ENCODE measurements at regions of chr6 and their contacts with region 1.

Region 1: DNA sequence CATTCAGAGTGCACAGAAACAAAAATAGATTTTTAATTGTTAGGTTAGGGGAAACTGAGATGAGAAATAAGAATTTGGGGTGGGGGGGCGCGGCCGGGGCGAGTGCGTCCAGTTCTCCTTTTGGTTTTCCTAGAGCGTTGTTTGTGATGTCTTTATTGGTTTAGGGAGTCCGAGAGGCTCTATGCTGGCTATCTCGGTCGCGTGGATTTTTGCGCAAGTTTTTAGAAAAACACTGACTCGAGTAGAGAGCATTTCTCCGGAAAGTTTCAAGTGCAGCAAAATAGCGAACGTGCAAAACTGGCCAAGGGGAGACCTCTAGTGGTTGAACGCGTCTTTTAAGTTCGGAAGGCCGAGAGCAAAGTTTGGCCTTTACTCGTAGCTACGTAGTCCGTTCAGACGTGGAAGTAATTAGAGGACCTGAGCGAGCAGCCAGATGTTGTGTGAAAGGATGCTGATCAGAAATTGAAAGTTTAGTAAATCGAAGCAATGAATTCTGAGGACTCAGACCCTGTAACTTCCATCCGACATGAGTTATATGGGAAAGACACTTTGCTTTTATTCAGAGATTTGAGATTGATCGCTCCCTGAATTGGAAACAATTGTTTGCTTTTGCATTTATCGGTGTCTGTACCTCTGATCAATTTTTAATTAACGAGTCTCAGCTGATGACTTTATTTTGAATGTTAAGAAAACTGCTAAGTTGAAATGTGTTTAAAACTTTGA is 2.7 kb downstream of the L3MBTL3 start:
- DNase-seq: peak; percentile 89
- H3K4me3 ChIP-seq: peak overlapping the region; percentile 74
- H3K27ac ChIP-seq: peak overlapping the region; percentile 41
- H3K27me3 ChIP-seq: no peaks in the 10 kb centered on the region
- CTCF ChIP-seq: peak; percentile 91

Region 2: DNA sequence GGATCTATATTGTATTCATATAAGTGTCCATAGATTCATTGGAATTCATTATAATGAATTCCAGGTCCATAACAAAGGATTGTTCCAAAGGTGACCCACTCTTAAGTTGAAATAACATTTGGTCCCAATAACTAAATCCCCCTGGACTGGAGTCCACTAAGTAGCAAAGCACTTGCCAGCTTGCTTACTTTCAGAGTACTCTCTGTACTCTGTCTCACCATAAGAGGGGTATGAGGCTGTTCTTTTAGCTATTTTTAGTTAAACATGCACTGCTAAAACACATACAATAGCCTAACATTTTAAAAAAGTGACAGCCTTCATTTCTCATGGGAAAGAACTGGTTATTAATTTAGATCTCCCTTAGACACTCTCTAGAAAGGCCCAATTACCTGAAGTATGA is 294.4 kb before region 1 on chr6:
- CTCF ChIA-PET with region 1: no interaction called
- POLR2A ChIA-PET with region 1: no interaction called
- DNase-seq: no peak
- H3K4me3 ChIP-seq: no peak overlapping the region
- H3K27ac ChIP-seq: no peak overlapping the region
- H3K27me3 ChIP-seq: no peaks in the 10 kb centered on the region
- CTCF ChIP-seq: no peak

Region 3: DNA sequence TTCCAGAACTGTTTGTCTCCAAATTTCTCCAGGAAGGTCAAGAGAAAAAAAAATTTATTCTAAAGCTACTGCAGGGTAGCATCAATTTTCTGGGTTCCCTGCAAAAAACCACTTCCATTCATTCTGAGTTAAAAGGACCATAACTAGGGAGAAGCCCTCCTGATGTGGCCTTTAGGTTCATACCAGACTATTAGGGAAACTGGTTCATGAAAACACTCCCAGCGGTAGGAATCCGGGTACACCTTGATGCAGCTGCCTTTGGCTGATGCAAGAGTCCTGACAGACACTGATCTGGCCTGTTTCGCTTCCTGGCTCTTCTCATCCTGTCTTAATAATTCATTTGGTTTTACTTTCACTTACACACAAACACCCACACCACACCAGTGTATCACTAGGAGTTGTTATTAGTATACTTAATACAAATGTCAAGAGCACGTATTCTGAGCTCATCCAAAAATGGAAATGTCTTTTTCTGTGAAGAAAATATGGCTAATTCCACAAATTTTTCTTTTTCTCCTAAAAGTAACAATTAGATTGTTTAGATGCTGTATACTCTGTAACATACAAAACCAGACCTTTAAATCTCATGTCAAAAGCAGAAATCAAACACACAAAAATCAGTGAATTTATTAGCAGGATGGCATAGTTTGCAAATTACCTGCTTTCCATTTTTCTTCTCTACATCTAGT is 272.7 kb before region 1 on chr6:
- CTCF ChIA-PET with region 1: interaction called, 12 read pairs
- POLR2A ChIA-PET with region 1: no interaction called
- DNase-seq: no peak
- H3K4me3 ChIP-seq: no peak overlapping the region
- H3K27ac ChIP-seq: peak overlapping the region; percentile 53
- H3K27me3 ChIP-seq: no peaks in the 10 kb centered on the region
- CTCF ChIP-seq: no peak

Region 4: DNA sequence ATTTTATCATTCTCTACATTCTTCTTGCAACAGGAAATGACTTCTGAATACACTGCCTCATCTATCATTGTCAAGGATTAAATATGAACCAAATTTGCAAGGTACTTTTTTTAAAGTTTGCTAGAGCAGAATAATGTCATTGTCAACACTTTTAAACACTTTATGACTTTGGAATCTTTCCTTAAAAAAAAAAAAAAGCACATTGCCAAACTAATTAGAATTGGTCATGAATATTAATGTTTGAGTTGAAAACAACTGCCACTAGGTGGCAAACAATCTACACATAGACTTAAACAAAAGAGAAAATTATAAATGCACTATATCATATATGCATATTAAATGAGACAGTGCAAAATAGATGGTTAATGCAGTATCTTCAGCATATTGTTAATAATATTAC is 127.4 kb before region 1 on chr6:
- CTCF ChIA-PET with region 1: interaction called, 19 read pairs
- POLR2A ChIA-PET with region 1: no interaction called
- DNase-seq: no peak
- H3K4me3 ChIP-seq: no peak overlapping the region
- H3K27ac ChIP-seq: no peak overlapping the region
- H3K27me3 ChIP-seq: no peaks in the 10 kb centered on the region
- CTCF ChIP-seq: peak; percentile 48

Region 5: GRCh38 chr6:130032758-130033340 is 11.8 kb after region 1 on chr6:
- CTCF ChIA-PET with region 1: interaction called, 22 read pairs
- POLR2A ChIA-PET with region 1: no interaction called
- DNase-seq: no peak
- H3K4me3 ChIP-seq: no peak overlapping the region
- H3K27ac ChIP-seq: no peak overlapping the region
- H3K27me3 ChIP-seq: no peaks in the 10 kb centered on the region
- CTCF ChIP-seq: no peak

Region 6: GRCh38 chr6:130054725-130055124 is 33.7 kb after region 1 on chr6:
- CTCF ChIA-PET with region 1: no interaction called
- POLR2A ChIA-PET with region 1: no interaction called
- DNase-seq: no peak
- H3K4me3 ChIP-seq: no peak overlapping the region
- H3K27ac ChIP-seq: no peak overlapping the region
- H3K27me3 ChIP-seq: no peaks in the 10 kb centered on the region
- CTCF ChIP-seq: no peak

Region 7: DNA sequence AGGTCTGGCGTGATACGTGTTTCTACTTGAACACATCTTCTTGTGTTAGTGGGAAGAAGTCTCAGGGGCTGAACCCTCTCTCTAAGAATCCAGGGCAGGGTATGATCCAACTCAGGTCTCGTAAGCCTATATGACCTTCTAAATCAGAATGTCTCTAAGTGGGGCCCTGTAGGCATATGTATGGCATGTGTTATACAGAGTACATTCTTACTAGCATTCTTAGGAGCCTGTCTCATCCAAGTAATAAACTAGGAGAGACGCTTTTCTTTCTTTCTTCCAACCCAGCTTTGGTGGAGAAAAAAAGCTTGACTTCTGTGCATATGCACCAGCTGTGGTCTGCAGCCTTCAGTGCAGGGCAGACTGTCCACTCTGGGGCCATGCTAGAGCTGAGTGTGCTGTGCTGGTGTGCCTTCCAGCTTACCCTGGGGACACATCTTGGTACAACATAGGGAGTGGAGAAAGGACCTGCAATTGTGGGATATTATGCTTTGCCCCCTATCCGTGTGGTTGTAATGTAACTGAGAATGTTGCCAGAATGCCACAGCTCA is 44.6 kb after region 1 on chr6:
- CTCF ChIA-PET with region 1: no interaction called
- POLR2A ChIA-PET with region 1: no interaction called
- DNase-seq: peak; percentile 27
- H3K4me3 ChIP-seq: no peak overlapping the region
- H3K27ac ChIP-seq: no peak overlapping the region
- H3K27me3 ChIP-seq: no peaks in the 10 kb centered on the region
- CTCF ChIP-seq: no peak

Region 8: GRCh38 chr6:130293800-130294199 is 272.7 kb after region 1 on chr6:
- CTCF ChIA-PET with region 1: no interaction called
- POLR2A ChIA-PET with region 1: no interaction called
- DNase-seq: peak; percentile 44
- H3K4me3 ChIP-seq: no peak overlapping the region
- H3K27ac ChIP-seq: no peak overlapping the region
- H3K27me3 ChIP-seq: no peaks in the 10 kb centered on the region
- CTCF ChIP-seq: peak; percentile 80

Measured in AG04450 (cell line).